Natural killer cell (primary cell): ENCODE measurements at regions of chr11 and their contacts with region 1.

Region 1: GRCh38 chr11:9613118-9613829 is 39.8 kb downstream of the WEE1 start:
- DNase-seq: peak; percentile 85 to 90
- ATAC-seq: peak; percentile 59 to 74 (median 68)
- H3K4me3 ChIP-seq: peak overlapping the region; percentile 51
- H3K4me3 Mint-ChIP-seq: peak overlapping the region; percentile 95
- H3K27ac ChIP-seq: peak overlapping the region; percentile 94
- H3K27ac Mint-ChIP-seq: peak overlapping the region; percentile 76 to 93
- H3K4me1 ChIP-seq: peaks cover 19% of the 10 kb centered on the region
- H3K4me1 Mint-ChIP-seq: peaks cover 20 to 22% of the 10 kb centered on the region in 2 donors
- H3K27me3 ChIP-seq: no peaks in the 10 kb centered on the region
- H3K27me3 Mint-ChIP-seq: peaks cover 0 to 6% of the 10 kb centered on the region in 2 donors
- CTCF ChIP-seq: peak; percentile 87

Region 2: DNA sequence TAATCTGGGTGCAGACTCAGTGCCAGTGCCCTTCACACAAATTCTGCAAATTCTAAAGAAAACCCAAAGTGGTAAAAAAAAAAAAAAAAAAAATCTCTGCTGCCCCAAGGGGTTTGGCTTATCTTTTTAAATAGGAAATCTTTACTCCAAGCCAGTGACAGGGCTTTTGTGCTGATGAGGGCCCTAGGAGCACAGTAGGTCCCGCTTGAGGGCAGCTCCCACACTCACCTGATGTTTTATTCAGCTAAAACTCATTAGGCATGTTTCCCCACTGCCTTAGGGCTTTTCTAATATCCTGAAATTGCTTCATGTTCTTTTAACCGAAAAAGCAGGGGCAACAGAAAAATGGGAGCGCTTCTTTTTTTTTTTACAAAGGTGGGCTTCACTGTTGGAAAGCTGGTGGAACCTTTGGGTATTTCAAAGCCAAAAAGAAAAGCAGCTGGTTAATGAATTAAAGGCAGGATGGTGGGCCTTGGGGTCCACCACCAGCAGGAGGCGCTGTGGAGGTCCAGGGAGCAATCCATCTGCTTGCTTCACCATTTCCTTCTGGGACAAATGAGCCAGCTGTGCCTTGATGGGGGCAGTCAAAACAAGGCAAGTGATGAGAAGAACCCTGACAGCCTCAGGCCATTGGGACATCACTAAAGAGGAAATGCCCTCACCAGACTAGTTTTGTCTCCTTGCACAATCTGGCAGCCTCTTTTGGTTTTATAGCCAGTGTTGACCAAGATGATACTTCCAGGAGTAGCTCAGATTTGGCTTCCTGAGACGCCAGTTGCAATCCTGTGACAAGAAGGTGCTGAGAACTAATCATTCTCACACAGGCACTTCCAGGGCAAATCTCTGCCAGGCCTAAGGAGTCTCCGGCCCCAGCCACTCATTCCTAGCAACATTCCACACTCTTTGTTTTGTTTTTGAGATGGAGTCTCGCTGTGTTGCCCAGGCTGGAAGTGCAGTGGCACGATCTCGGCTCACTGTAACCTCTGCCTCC is 78.2 kb before region 1 on chr11:
- intact Hi-C with region 1: loop called (anchors 1 kb)
- DNase-seq: peak; percentile 77 to 87
- ATAC-seq: peak; percentile 69 to 84 (median 78)
- H3K4me3 ChIP-seq: no peak overlapping the region
- H3K4me3 Mint-ChIP-seq: no peak overlapping the region
- H3K27ac ChIP-seq: no peak overlapping the region
- H3K27ac Mint-ChIP-seq: no peak overlapping the region
- H3K4me1 ChIP-seq: no peaks in the 10 kb centered on the region
- H3K4me1 Mint-ChIP-seq: no peaks in the 10 kb centered on the region
- H3K27me3 ChIP-seq: no peaks in the 10 kb centered on the region
- H3K27me3 Mint-ChIP-seq: no peaks in the 10 kb centered on the region
- CTCF ChIP-seq: peak; percentile 89

Region 3: GRCh38 chr11:9573052-9573774 is 40.1 kb before region 1 on chr11 and contains the start of gene WEE1:
- intact Hi-C with region 1: loop called (anchors 1 kb)
- DNase-seq: peak; percentile 96 to 97
- ATAC-seq: peak; percentile 90 to 97 (median 91)
- H3K4me3 ChIP-seq: peak within 1 kb of the TSS; percentile 97
- H3K4me3 Mint-ChIP-seq: peak within 1 kb of the TSS; percentile 92
- H3K27ac ChIP-seq: peak within 1 kb of the TSS; percentile 83
- H3K27ac Mint-ChIP-seq: peak within 1 kb of the TSS; percentile 85 to 90
- H3K4me1 ChIP-seq: peaks cover 17% of the 10 kb centered on the region
- H3K4me1 Mint-ChIP-seq: peaks cover 23 to 33% of the 10 kb centered on the region in 2 donors
- H3K27me3 ChIP-seq: no peaks in the 10 kb centered on the region
- H3K27me3 Mint-ChIP-seq: no peaks in the 10 kb centered on the region
- CTCF ChIP-seq: no peak
- total RNA-seq, gene WEE1: 17.1 to 20.8 (median 19.0) TPM

Region 4: DNA sequence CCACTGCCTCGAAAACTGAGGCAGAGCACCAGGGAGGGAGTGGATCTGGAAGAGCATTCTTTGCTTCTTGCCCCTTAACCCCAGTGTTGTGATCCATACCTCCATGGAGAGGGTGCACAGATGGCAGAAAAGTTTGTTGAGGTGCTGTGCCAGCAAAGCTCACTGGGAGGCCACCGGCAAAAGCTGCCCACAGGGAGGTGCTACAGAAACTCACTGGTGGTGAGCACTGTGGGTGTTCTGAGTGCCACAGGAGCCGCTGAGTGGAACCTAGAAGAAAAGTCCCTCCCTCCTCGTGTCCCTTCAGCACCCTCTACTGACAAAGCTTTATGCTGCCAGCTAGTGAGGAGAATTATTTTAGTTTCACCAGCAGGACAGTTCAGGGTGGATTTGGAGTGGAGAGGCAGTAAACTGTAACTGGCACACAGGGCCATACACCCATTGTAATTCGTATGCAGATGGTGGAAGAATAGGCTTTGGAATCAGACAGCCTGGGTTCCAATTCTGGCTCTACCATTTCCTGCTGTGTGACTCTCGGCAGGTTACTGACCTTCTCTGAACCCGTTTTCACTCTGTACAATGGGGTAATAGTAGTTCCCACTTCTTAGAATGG is 135.2 kb after region 1 on chr11:
- intact Hi-C with region 1: loop called (anchors 1 kb)
- DNase-seq: peak; percentile 55 to 80
- ATAC-seq: peak; percentile 95 to 100 (median 99)
- H3K4me3 ChIP-seq: no peak overlapping the region
- H3K4me3 Mint-ChIP-seq: no peak overlapping the region
- H3K27ac ChIP-seq: no peak overlapping the region
- H3K27ac Mint-ChIP-seq: peak overlapping the region in 1 of 2 donors; percentile 40
- H3K4me1 ChIP-seq: peaks cover 10% of the 10 kb centered on the region
- H3K4me1 Mint-ChIP-seq: peaks cover 13 to 14% of the 10 kb centered on the region in 2 donors
- H3K27me3 ChIP-seq: no peaks in the 10 kb centered on the region
- H3K27me3 Mint-ChIP-seq: no peaks in the 10 kb centered on the region
- CTCF ChIP-seq: peak; percentile 61